WTC11 (cell line): ENCODE measurements at regions of chr1 and their contacts with region 1.

Region 1: GRCh38 chr1:46223472-46223943 is 20.4 kb downstream of the LURAP1 start:
- DNase-seq: peak; percentile 66
- ATAC-seq: peak; percentile 84
- H3K4me3 Mint-ChIP-seq: no peak overlapping the region
- H3K27ac Mint-ChIP-seq: peak overlapping the region; percentile 84
- H3K4me1 Mint-ChIP-seq: peaks cover 33% of the 10 kb centered on the region
- H3K27me3 Mint-ChIP-seq: no peaks in the 10 kb centered on the region
- CTCF ChIP-seq: peak; percentile 83

Region 2: GRCh38 chr1:46043458-46044017 is 180.0 kb before region 1 on chr1:
- CTCF ChIA-PET with region 1: interaction called, 60 read pairs
- POLR2A ChIA-PET with region 1: no interaction called
- DNase-seq: peak; percentile 41
- ATAC-seq: peak; percentile 98
- H3K4me3 Mint-ChIP-seq: peak overlapping the region; percentile 46
- H3K27ac Mint-ChIP-seq: peak overlapping the region; percentile 71
- H3K4me1 Mint-ChIP-seq: peaks cover 23% of the 10 kb centered on the region
- H3K27me3 Mint-ChIP-seq: peaks cover 7% of the 10 kb centered on the region
- CTCF ChIP-seq: no peak

Region 3: GRCh38 chr1:46183088-46183842 is 40.2 kb before region 1 on chr1:
- CTCF ChIA-PET with region 1: interaction called, 62 read pairs
- POLR2A ChIA-PET with region 1: interaction called, 7 read pairs
- DNase-seq: no peak
- ATAC-seq: peak; percentile 11
- H3K4me3 Mint-ChIP-seq: no peak overlapping the region
- H3K27ac Mint-ChIP-seq: no peak overlapping the region
- H3K4me1 Mint-ChIP-seq: 0 out of 2 replicates have a peak, but pooled peaks cover 6% of the 10 kb centered on the region
- H3K27me3 Mint-ChIP-seq: peaks cover 8% of the 10 kb centered on the region
- CTCF ChIP-seq: no peak

Region 4: DNA sequence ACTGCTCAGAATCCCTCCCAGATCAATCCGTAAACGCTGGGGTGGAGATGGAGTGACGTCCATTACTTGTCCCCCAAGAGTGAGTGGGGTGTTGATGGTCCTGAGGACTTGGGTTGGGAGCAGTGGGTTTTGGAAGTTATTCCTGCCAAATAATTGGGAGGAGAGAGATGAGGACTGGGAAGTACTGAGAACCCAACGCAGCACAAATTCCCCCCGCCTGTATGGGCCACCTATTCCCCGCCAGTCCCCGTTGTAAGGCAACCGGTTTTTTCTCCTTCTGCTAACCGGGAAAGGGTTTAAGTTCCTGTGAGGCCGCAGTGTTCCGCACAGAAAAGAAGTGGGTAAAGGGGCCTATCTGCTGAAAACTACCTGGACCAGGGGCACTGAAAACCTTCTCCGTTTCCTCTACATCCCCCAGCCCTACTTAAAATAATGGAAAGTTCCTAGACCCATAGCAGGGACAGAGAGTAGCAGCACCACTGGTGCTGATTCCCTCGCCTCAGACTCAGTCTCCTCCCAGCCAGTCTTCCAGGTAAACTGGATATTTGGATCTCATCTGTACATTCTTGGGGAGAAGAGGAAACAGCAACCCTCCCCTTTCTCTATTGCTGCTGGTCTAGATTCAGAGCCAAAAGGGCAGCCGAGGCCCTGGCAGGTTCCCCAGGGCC is 19.6 kb before region 1 on chr1:
- CTCF ChIA-PET with region 1: interaction called, 67 read pairs
- POLR2A ChIA-PET with region 1: interaction called, 5 read pairs
- DNase-seq: no peak
- ATAC-seq: peak; percentile 33
- H3K4me3 Mint-ChIP-seq: peak overlapping the region; percentile 81
- H3K27ac Mint-ChIP-seq: no peak overlapping the region
- H3K4me1 Mint-ChIP-seq: peaks cover 30% of the 10 kb centered on the region
- H3K27me3 Mint-ChIP-seq: no peaks in the 10 kb centered on the region; the same call in 1 of the 2 replicates
- CTCF ChIP-seq: no peak

Region 5: GRCh38 chr1:46247436-46248121 is 24.1 kb after region 1 on chr1 and contains the start of gene RAD54L:
- CTCF ChIA-PET with region 1: interaction called, 126 read pairs
- POLR2A ChIA-PET with region 1: interaction called, 5 read pairs
- DNase-seq: peak; percentile 99
- ATAC-seq: peak; percentile 90
- H3K4me3 Mint-ChIP-seq: peak within 1 kb of the TSS; percentile 99
- H3K27ac Mint-ChIP-seq: peak within 1 kb of the TSS; percentile 99
- H3K4me1 Mint-ChIP-seq: peaks cover 17% of the 10 kb centered on the region
- H3K27me3 Mint-ChIP-seq: no peaks in the 10 kb centered on the region; the same call in 1 of the 2 replicates
- CTCF ChIP-seq: no peak
- total RNA-seq, gene RAD54L: 51.2 to 54.7 TPM (median 53.7 TPM) in 3 replicates